ENCODE measurements at regions of chr20 and their contacts with region 1.

Region 1: GRCh38 chr20:45095753-45096371 is 5.1 kb downstream of the KCNS1 start:
- DNase-seq: peak; percentile 79
- ATAC-seq: peak; percentile 63
- H3K4me3 Mint-ChIP-seq: no peak overlapping the region
- H3K27ac Mint-ChIP-seq: no peak overlapping the region
- H3K4me1 Mint-ChIP-seq: peaks cover 13% of the 10 kb centered on the region
- H3K27me3 Mint-ChIP-seq: peaks cover 32% of the 10 kb centered on the region
- CTCF ChIP-seq: peak; percentile 82

Region 2: DNA sequence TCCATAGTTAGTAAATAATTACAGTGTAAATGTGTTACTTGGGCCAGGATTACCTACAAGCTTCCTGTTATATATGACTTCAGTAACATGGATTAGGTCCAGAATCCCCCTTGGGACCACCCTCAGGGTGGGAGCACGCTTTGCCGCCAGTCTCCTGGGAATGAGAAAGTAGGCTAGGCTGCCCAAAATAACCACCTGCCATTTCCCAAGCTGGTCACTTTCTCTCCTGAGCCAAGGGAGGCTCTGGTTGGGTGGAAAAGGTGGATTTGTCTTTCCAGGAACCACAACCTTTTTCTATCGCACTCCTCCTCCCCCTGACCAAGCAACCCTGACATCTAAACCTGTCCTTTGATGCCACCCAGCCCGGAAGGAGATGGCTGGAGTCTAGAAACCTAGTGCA is 275.9 kb before region 1 on chr20:
- CTCF ChIA-PET with region 1: no interaction called
- POLR2A ChIA-PET with region 1: no interaction called
- intact Hi-C with region 1: no loop called
- DNase-seq: no peak
- ATAC-seq: no peak
- H3K4me3 Mint-ChIP-seq: no peak overlapping the region
- H3K27ac Mint-ChIP-seq: no peak overlapping the region
- H3K4me1 Mint-ChIP-seq: no peaks in the 10 kb centered on the region
- H3K27me3 Mint-ChIP-seq: no peaks in the 10 kb centered on the region
- CTCF ChIP-seq: no peak

Region 3: GRCh38 chr20:44960103-44960852 is 135.6 kb before region 1 on chr20 and contains the start of gene TOMM34:
- CTCF ChIA-PET with region 1: interaction called, 12 read pairs
- POLR2A ChIA-PET with region 1: no interaction called
- intact Hi-C with region 1: no loop called
- DNase-seq: peak; percentile 98
- ATAC-seq: peak; percentile 91
- H3K4me3 Mint-ChIP-seq: peak within 1 kb of the TSS; percentile 84
- H3K27ac Mint-ChIP-seq: peak within 1 kb of the TSS; percentile 99
- H3K4me1 Mint-ChIP-seq: peaks cover 72% of the 10 kb centered on the region
- H3K27me3 Mint-ChIP-seq: no peaks in the 10 kb centered on the region
- CTCF ChIP-seq: no peak
- total RNA-seq, gene TOMM34: 60.5 to 62.4 TPM

Region 4: GRCh38 chr20:45011108-45011526 is 84.7 kb before region 1 on chr20:
- CTCF ChIA-PET with region 1: interaction called, 53 read pairs
- POLR2A ChIA-PET with region 1: no interaction called
- intact Hi-C with region 1: no loop called
- DNase-seq: peak; percentile 76
- ATAC-seq: peak; percentile 82
- H3K4me3 Mint-ChIP-seq: no peak overlapping the region
- H3K27ac Mint-ChIP-seq: no peak overlapping the region
- H3K4me1 Mint-ChIP-seq: peaks cover 57% of the 10 kb centered on the region
- H3K27me3 Mint-ChIP-seq: no peaks in the 10 kb centered on the region
- CTCF ChIP-seq: peak; percentile 75

Region 5: GRCh38 chr20:45036044-45036755 is 59.7 kb before region 1 on chr20:
- CTCF ChIA-PET with region 1: interaction called, 137 read pairs
- POLR2A ChIA-PET with region 1: interaction called, 3 read pairs
- intact Hi-C with region 1: loop called (anchors 5 kb)
- DNase-seq: peak; percentile 85
- ATAC-seq: peak; percentile 87
- H3K4me3 Mint-ChIP-seq: peak overlapping the region; percentile 13
- H3K27ac Mint-ChIP-seq: peak overlapping the region; percentile 97
- H3K4me1 Mint-ChIP-seq: peaks cover 78% of the 10 kb centered on the region
- H3K27me3 Mint-ChIP-seq: no peaks in the 10 kb centered on the region
- CTCF ChIP-seq: no peak

Region 6: DNA sequence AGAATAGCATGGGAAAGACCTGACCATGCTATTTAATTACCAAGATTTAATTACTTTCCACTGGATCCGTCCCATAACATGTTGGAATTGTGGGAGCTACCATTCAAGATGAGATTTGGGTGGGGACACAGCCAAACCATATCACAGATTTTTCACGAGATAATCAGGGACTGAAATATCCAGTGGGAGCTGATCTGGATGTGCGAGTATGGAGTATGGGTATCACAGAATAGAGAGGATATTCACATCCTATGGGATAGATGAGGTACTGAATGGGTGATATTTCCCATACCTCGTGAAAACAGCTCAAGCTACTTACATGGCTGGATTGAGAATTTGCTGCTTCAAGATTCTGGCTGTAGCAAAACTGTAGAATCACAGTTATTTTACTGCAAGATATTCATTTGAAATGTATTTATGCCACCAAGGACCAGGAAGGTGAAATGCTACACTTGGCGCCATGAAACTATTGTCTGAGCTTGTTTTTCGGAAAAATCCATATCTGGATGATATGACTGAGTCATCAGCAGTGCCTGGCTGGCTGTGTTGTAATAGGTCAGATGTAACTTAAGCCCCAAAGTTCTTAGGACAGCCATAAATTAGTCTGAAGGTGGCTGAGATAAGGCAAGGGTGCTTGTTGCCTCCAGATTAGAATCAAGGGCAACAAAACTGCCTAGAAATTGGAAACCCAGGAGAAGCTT is 24.8 kb before region 1 on chr20:
- CTCF ChIA-PET with region 1: interaction called, 15 read pairs
- POLR2A ChIA-PET with region 1: interaction called, 3 read pairs
- intact Hi-C with region 1: no loop called
- DNase-seq: no peak
- ATAC-seq: no peak
- H3K4me3 Mint-ChIP-seq: no peak overlapping the region
- H3K27ac Mint-ChIP-seq: peak overlapping the region; percentile 56
- H3K4me1 Mint-ChIP-seq: peaks cover 60% of the 10 kb centered on the region
- H3K27me3 Mint-ChIP-seq: no peaks in the 10 kb centered on the region
- CTCF ChIP-seq: no peak

Region 7: GRCh38 chr20:45138561-45139300 is 42.9 kb after region 1 on chr20:
- CTCF ChIA-PET with region 1: interaction called, 12 read pairs
- POLR2A ChIA-PET with region 1: no interaction called
- intact Hi-C with region 1: no loop called
- DNase-seq: peak; percentile 89
- ATAC-seq: peak; percentile 85
- H3K4me3 Mint-ChIP-seq: no peak overlapping the region
- H3K27ac Mint-ChIP-seq: no peak overlapping the region
- H3K4me1 Mint-ChIP-seq: no peaks in the 10 kb centered on the region
- H3K27me3 Mint-ChIP-seq: peaks cover 5% of the 10 kb centered on the region
- CTCF ChIP-seq: peak; percentile 82

Region 8: DNA sequence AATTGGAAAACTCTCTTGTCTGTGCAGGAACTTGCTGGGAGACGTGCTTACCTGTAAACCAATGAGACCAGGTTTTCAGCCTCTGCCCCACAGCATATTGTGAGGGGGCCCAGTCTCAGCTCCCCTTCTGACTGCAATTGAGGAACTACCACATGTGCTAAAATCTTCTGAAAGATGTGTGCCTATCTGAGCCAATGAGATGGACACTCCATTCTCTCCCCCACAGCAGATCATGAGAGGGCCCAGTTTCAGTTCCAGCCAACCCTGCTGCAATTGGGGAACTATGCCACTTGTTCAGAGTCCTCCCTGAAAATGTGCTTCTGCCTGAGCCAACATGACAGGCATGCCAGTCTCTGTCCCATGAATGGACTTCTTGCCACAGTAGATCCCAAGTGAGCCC is 57.9 kb after region 1 on chr20:
- CTCF ChIA-PET with region 1: no interaction called
- POLR2A ChIA-PET with region 1: no interaction called
- intact Hi-C with region 1: no loop called
- DNase-seq: no peak
- ATAC-seq: no peak
- H3K4me3 Mint-ChIP-seq: no peak overlapping the region
- H3K27ac Mint-ChIP-seq: no peak overlapping the region
- H3K4me1 Mint-ChIP-seq: no peaks in the 10 kb centered on the region
- H3K27me3 Mint-ChIP-seq: peaks cover 18% of the 10 kb centered on the region
- CTCF ChIP-seq: no peak

Region 9: GRCh38 chr20:45275338-45275737 is 179.5 kb after region 1 on chr20:
- CTCF ChIA-PET with region 1: no interaction called
- POLR2A ChIA-PET with region 1: no interaction called
- intact Hi-C with region 1: no loop called
- DNase-seq: no peak
- ATAC-seq: no peak
- H3K4me3 Mint-ChIP-seq: no peak overlapping the region
- H3K27ac Mint-ChIP-seq: no peak overlapping the region
- H3K4me1 Mint-ChIP-seq: no peaks in the 10 kb centered on the region
- H3K27me3 Mint-ChIP-seq: peaks cover 44% of the 10 kb centered on the region
- CTCF ChIP-seq: no peak

Measured in activated CD8-positive, alpha-beta T cell treated with anti-CD3 and anti-CD28 coated beads for 36 hours (primary cell).